OCI-LY7 (cell line): ENCODE measurements at regions of chr3 and their contacts with region 1.

Region 1: GRCh38 chr3:188082031-188082430 is 71.9 kb upstream of the LPP start:
- DNase-seq: no peak
- H3K4me3 ChIP-seq: no peak overlapping the region
- H3K27ac ChIP-seq: no peak overlapping the region
- H3K4me1 ChIP-seq: peaks cover 56% of the 10 kb centered on the region
- CTCF ChIP-seq: no peak

Region 2: DNA sequence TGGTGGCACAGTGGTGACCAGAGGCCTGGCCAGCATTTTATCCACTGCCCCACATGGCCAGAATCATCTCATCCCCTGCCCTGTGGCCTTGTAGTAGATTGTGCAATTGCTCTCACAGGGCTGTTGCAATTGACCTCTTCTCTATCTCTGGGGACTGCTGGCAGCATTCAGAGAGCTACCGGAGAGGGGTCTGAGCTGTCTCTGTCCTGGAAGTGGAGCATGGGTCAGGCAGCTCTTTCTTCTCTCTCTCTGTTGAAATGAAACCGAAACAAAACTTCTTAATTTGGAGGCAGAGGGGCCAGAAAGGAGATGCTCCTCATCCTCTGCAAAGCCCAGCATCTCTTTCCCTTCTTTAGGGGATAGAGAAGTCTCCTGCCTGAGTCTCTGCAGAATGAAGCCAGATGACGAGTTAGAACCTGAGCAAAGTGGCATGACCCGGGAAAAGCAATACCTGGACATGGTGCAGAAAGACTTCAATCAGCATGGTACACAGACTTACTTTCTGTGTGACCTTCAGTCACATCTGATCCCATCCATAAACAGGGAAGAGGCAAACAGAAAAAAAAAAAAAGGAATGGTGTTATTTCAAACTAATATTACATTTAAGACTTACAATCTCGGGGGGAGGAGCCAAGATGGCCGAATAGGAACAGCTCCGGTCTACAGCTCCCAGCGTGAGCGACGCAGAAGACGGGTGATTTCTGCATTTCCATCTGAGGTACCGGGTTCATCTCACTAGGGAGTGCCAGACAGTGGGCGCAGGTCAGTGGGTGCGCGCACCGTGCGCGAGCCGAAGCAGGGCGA is 192.2 kb before region 1 on chr3:
- CTCF ChIA-PET with region 1: no interaction called
- POLR2A ChIA-PET with region 1: no interaction called
- intact Hi-C with region 1: no loop called
- DNase-seq: peak; percentile 36
- H3K4me3 ChIP-seq: no peak overlapping the region
- H3K27ac ChIP-seq: no peak overlapping the region
- H3K4me1 ChIP-seq: peaks cover 8% of the 10 kb centered on the region
- CTCF ChIP-seq: no peak

Region 3: DNA sequence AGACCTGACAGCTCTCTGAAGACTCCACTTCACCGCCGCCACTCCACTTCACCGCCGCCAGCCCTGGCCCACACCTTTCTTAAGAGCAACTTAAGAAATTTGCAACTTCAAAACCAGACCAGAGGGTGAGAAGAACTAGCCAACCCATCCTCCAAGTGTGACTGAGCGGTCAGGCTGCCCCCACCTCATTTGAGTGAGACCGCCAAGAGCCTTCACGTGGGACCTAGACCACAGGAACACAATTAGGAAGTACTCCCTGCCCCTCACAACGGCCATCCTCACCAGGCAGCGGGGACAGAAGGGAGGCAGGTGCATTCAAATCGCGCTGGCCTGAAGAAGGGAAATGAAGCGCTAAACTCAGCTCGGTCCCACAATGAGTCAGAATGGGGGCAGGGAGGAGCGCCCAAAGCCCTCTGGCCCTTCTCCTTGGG is 180.0 kb before region 1 on chr3:
- CTCF ChIA-PET with region 1: no interaction called
- POLR2A ChIA-PET with region 1: interaction called, 28 read pairs
- intact Hi-C with region 1: loop called (anchors 2 kb)
- DNase-seq: peak; percentile 96
- H3K4me3 ChIP-seq: peak overlapping the region; percentile 59
- H3K27ac ChIP-seq: peak overlapping the region; percentile 100
- H3K4me1 ChIP-seq: peaks cover 98% of the 10 kb centered on the region
- CTCF ChIP-seq: no peak

Region 4: GRCh38 chr3:188000361-188000861 is 81.6 kb before region 1 on chr3:
- CTCF ChIA-PET with region 1: interaction called, 3 read pairs
- POLR2A ChIA-PET with region 1: interaction called, 18 read pairs
- intact Hi-C with region 1: loop called (anchors 1 kb)
- DNase-seq: peak; percentile 82
- H3K4me3 ChIP-seq: peak overlapping the region; percentile 60
- H3K27ac ChIP-seq: peak overlapping the region; percentile 96
- H3K4me1 ChIP-seq: peaks cover 83% of the 10 kb centered on the region
- CTCF ChIP-seq: no peak

Region 5: DNA sequence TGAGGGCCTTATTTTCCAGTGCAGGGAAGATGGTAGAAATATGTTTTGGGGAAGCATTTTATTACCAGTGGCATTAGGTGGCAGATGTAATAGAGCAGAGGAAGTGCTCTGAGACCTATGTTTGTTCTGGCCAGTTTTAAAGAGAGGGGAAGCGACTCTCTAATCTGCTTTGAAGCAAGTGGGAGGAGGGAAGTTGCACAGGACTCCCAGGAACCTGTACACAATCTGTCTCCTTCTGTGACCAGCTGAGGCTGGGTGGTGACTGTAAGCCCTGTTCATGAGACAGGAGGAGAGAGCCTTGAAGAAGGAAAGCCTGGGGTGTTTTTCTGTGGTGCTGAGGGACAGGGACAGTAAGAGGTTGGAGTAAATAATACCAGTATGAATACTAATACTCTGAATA is 132.4 kb after region 1 on chr3:
- CTCF ChIA-PET with region 1: no interaction called
- POLR2A ChIA-PET with region 1: interaction called, 4 read pairs
- intact Hi-C with region 1: loop called (anchors 2 kb)
- DNase-seq: peak; percentile 82
- H3K4me3 ChIP-seq: peak overlapping the region; percentile 47
- H3K27ac ChIP-seq: peak overlapping the region; percentile 98
- H3K4me1 ChIP-seq: peaks cover 80% of the 10 kb centered on the region
- CTCF ChIP-seq: no peak

Region 6: DNA sequence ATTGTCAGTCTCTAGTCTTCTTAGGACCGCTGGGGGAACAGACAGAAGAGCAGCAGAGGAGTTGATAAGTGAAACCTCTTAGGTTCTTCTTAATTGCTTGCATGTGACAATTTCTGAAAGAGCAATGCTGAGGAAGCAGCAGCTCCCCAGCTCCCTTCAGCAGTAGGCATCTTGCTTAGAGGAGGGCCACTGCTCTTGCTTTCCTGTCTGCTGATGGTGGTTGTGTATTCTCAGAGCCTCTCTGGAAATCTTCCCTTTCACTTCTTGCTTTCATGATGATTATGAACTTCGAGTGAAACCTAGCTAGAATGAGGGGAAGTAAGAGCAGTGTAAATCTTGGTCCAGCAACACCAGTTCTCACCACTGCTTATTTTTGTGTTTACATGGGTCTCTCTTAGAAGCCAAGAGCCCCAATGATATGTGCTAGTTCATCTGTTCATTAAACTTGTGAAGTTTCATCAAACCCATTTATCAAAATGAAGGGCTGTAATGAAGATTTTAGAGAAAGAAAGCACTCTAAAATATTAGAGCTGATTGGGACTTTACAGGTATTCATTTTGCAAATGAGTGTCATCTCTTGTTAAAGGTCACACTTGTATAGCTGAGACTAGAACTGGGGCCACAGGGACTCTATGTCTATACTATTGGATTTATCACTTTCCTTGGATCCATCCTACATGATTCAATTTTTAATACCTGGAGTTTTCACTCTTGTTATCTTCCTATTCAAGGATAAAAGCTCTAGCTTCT is 318.6 kb after region 1 on chr3:
- CTCF ChIA-PET with region 1: no interaction called
- POLR2A ChIA-PET with region 1: no interaction called
- intact Hi-C with region 1: loop called (anchors 5 kb)
- DNase-seq: peak; percentile 78
- H3K4me3 ChIP-seq: no peak overlapping the region
- H3K27ac ChIP-seq: peak overlapping the region; percentile 48
- H3K4me1 ChIP-seq: peaks cover 46% of the 10 kb centered on the region
- CTCF ChIP-seq: no peak

Region 7: GRCh38 chr3:188562144-188562543 is 480.1 kb after region 1 on chr3:
- CTCF ChIA-PET with region 1: no interaction called
- POLR2A ChIA-PET with region 1: no interaction called
- intact Hi-C with region 1: no loop called
- DNase-seq: no peak
- H3K4me3 ChIP-seq: no peak overlapping the region
- H3K27ac ChIP-seq: no peak overlapping the region
- H3K4me1 ChIP-seq: no peaks in the 10 kb centered on the region
- CTCF ChIP-seq: no peak